ENCODE measurements at regions of chr6 and their contacts with region 1.

Region 1: GRCh38 chr6:156250593-156250992 is 526.6 kb upstream of the ARID1B start:
- DNase-seq: no peak
- ATAC-seq: no peak
- H3K4me3 ChIP-seq: no peak overlapping the region
- H3K27ac ChIP-seq: no peak overlapping the region
- H3K4me1 ChIP-seq: no peaks in the 10 kb centered on the region
- H3K27me3 ChIP-seq: no peaks in the 10 kb centered on the region
- CTCF ChIP-seq: no peak
- POLR2A ChIP-seq: no peak

Region 2: DNA sequence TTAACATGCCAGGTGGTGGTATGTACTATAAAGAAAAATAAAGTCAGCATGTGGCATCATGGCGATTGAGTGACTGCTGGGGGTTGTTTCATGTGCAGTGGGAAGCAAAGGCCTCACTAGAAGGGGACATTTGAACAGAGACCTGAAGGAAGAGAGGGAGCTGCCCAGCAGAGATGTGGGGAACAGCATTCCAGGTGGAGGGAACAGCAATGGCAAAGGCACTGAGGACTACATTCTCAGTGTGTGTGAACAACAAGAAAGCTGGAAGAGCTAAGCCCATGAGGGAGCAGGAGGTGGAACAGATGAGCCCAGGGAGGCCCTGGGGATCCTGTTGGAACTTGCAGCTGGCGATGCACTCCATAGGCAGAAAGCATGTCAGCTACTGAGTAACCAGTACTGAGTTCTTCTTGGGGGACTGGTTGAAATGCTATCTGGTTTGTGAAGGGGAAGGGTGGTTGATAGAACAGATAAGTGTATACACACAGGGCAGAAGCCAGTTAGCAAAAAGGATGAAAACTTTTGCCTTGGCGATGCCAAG is 824.1 kb before region 1 on chr6:
- intact Hi-C with region 1: loop called in 1 of 10 experiments (anchors 5 kb)
- DNase-seq: no peak
- ATAC-seq: no peak
- H3K4me3 ChIP-seq: no peak overlapping the region
- H3K27ac ChIP-seq: no peak overlapping the region
- H3K4me1 ChIP-seq: no peaks in the 10 kb centered on the region
- H3K27me3 ChIP-seq: no peaks in the 10 kb centered on the region
- CTCF ChIP-seq: no peak
- POLR2A ChIP-seq: no peak

Region 3: GRCh38 chr6:155436981-155437749 is 813.4 kb before region 1 on chr6:
- intact Hi-C with region 1: no loop called
- DNase-seq: no peak
- ATAC-seq: peak in 3 of 4 donors; percentile 49 to 72 (median 65)
- H3K4me3 ChIP-seq: no peak overlapping the region
- H3K27ac ChIP-seq: no peak overlapping the region
- H3K4me1 ChIP-seq: peaks cover 0 to 9% (median 2%) of the 10 kb centered on the region in 12 donors
- H3K27me3 ChIP-seq: no peaks in the 10 kb centered on the region
- CTCF ChIP-seq: no peak
- POLR2A ChIP-seq: no peak

Region 4: GRCh38 chr6:155936551-155936950 is 314.0 kb before region 1 on chr6:
- intact Hi-C with region 1: no loop called
- DNase-seq: peak in 2 of 5 donors; percentile 12 to 27
- ATAC-seq: peak in 3 of 4 donors; percentile 46 to 67 (median 64)
- H3K4me3 ChIP-seq: no peak overlapping the region
- H3K27ac ChIP-seq: no peak overlapping the region
- H3K4me1 ChIP-seq: no peaks in the 10 kb centered on the region
- H3K27me3 ChIP-seq: no peaks in the 10 kb centered on the region
- CTCF ChIP-seq: no peak
- POLR2A ChIP-seq: no peak

Measured in heart left ventricle (tissue), 16 donors.